Heart left ventricle (tissue), 16 donors: ENCODE measurements at regions of chr14 and their contacts with region 1.

Region 1: DNA sequence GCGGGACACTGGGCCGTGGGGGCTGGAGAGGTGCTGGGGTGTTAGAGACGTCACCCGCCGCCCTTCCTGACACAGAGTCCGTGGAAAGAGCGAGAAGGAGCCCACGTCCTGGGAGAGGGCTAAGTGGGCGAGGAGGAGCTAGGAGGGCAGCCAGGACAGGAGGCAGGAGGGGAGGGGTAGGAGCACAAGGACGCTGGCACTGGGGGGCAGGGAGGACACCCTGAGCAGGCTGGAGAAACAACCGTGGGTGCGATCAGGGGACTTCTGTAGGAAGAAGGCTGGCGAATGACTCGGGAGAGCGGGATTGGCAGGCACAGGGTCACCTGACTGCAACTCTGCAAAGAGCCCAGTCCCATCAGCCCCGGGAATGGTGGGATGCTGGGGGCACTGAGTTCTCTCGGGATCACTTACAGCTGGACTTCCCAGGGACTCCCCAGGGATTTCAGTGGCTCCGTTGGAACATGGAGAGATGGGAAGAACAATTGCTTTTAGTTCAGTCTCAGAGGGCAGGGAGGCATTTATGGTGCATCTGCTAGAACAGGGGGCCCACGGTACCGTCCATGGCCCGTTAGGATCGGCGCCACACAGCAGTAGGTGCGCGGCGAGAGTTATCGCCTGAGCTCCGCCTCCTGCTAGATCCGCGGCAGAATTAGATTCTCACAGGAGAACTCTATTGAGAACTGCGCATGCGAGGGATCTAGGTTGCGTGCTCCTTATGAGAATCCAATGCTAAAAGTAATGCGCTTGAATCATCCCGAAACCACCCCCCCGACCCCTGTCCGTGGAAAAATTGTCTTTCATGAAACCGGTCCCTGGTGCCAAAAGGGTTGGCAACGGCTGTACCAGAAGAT is 24.3 kb downstream of the UBR7 start:
- DNase-seq: peak in 4 of 5 donors; percentile 22 to 50 (median 38)
- ATAC-seq: peak in 3 of 4 donors; percentile 69 to 76 (median 73)
- H3K4me3 ChIP-seq: peak overlapping the region; percentile 17 to 63 (median 50)
- H3K27ac ChIP-seq: no peak overlapping the region
- H3K4me1 ChIP-seq: peaks cover 0 to 6% (median 0%) of the 10 kb centered on the region in 12 donors
- H3K27me3 ChIP-seq: peaks cover 0 to 9% (median 0%) of the 10 kb centered on the region in 9 donors
- CTCF ChIP-seq: no peak
- POLR2A ChIP-seq: no peak

Region 2: GRCh38 chr14:93137864-93138263 is 93.5 kb before region 1 on chr14:
- intact Hi-C with region 1: no loop called
- DNase-seq: peak; percentile 32 to 77 (median 69)
- ATAC-seq: peak in 3 of 4 donors; percentile 69 to 82 (median 79)
- H3K4me3 ChIP-seq: no peak overlapping the region
- H3K27ac ChIP-seq: no peak overlapping the region
- H3K4me1 ChIP-seq: peaks cover 0 to 11% (median 0%) of the 10 kb centered on the region in 12 donors
- H3K27me3 ChIP-seq: no peaks in the 10 kb centered on the region
- CTCF ChIP-seq: peak in 4 of 12 donors; percentile 14 to 41 (median 36)
- POLR2A ChIP-seq: no peak

Region 3: DNA sequence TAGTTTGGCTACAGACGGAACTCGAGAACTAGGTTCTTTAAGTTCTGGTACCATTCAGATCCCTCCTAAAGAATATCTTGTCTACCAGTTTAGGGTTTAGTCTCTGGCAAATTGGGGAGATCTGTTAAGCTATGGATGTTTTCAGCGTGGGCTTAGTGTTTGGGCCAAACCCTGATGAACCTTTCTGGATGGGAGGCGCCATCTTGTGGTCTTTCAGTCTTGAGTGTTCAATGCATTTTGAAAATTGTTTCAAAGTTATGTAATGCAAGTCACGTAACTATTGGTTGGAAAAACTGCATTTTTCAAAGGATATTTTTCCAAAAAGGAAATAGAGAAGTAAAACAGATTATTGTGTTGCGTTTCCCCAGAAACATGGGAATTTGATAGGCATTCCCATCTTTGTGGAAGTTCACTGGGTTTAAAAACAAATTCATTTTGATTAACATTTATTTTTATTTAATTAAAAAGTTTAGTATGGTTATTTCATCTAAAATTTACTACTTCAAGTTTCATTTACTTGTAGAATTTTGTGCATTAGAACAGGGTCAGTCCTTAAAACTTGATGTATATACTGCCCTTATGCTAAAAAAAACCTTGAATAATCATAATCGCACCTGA is 387.9 kb after region 1 on chr14:
- intact Hi-C with region 1: loop called in 5 of 10 experiments (anchors 10 kb)
- DNase-seq: peak in 2 of 5 donors; percentile 29 to 34
- ATAC-seq: no peak
- H3K4me3 ChIP-seq: no peak overlapping the region
- H3K27ac ChIP-seq: no peak overlapping the region
- H3K4me1 ChIP-seq: no peaks in the 10 kb centered on the region
- H3K27me3 ChIP-seq: peaks cover 0 to 5% (median 0%) of the 10 kb centered on the region in 9 donors
- CTCF ChIP-seq: peak; percentile 32 to 71 (median 53)
- POLR2A ChIP-seq: no peak

Region 4: GRCh38 chr14:93629643-93630042 is 398.3 kb after region 1 on chr14:
- intact Hi-C with region 1: loop called in 2 of 10 experiments (anchors 10 kb)
- DNase-seq: no peak
- ATAC-seq: no peak
- H3K4me3 ChIP-seq: no peak overlapping the region
- H3K27ac ChIP-seq: no peak overlapping the region
- H3K4me1 ChIP-seq: no peaks in the 10 kb centered on the region
- H3K27me3 ChIP-seq: peaks cover 0 to 8% (median 0%) of the 10 kb centered on the region in 9 donors
- CTCF ChIP-seq: no peak
- POLR2A ChIP-seq: no peak